Naive thymus-derived CD4-positive, alpha-beta T cell (primary cell): ENCODE measurements at regions of chr14 and their contacts with region 1.

Region 1: DNA sequence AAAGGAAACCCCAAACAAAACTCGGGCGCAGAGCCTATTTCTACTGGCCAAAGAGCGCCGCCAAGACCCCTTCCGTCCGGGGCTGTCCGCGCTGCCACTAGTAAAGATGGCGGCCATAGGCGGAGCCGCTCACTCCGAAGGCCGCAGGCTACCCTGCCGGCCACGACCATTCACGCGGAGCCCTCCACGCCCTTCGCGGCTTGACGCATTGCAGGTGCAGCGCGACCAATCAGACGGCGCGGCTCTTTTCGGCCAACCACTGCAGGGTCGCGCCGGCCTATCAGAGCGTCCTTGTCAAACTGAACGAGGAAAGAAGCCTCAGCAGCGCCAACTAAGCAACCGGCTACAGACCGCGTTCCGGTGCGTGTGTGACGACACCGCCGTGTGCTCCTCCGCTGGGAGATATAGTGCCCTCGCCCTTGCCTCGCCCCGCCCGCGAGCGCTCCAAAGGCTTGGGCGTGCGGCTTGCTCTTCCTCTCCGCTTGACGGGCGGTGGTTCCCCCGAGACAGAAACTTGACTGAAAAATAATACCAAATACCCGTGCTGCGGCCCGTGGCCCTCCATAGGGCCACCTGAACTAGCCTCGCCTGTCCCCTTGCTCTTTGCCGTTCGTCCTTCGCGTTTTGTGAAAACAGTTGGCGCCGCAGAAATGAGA is 13.6 kb upstream of the CALM1 start:
- DNase-seq: peak; percentile 93 to 98 (median 96)
- ATAC-seq: peak; percentile 91
- H3K4me3 ChIP-seq: peak overlapping the region; percentile 95
- H3K4me3 Mint-ChIP-seq: no peak overlapping the region
- H3K27ac ChIP-seq: peak overlapping the region; percentile 99
- H3K27ac Mint-ChIP-seq: no peak overlapping the region
- H3K4me1 ChIP-seq: peaks cover 18 to 23% of the 10 kb centered on the region in 2 donors
- H3K4me1 Mint-ChIP-seq: peaks cover 20 to 37% (median 26%) of the 10 kb centered on the region in 7 donors
- H3K27me3 ChIP-seq: no peaks in the 10 kb centered on the region
- H3K27me3 Mint-ChIP-seq: peaks cover 0 to 5% (median 0%) of the 10 kb centered on the region in 5 donors

Region 2: DNA sequence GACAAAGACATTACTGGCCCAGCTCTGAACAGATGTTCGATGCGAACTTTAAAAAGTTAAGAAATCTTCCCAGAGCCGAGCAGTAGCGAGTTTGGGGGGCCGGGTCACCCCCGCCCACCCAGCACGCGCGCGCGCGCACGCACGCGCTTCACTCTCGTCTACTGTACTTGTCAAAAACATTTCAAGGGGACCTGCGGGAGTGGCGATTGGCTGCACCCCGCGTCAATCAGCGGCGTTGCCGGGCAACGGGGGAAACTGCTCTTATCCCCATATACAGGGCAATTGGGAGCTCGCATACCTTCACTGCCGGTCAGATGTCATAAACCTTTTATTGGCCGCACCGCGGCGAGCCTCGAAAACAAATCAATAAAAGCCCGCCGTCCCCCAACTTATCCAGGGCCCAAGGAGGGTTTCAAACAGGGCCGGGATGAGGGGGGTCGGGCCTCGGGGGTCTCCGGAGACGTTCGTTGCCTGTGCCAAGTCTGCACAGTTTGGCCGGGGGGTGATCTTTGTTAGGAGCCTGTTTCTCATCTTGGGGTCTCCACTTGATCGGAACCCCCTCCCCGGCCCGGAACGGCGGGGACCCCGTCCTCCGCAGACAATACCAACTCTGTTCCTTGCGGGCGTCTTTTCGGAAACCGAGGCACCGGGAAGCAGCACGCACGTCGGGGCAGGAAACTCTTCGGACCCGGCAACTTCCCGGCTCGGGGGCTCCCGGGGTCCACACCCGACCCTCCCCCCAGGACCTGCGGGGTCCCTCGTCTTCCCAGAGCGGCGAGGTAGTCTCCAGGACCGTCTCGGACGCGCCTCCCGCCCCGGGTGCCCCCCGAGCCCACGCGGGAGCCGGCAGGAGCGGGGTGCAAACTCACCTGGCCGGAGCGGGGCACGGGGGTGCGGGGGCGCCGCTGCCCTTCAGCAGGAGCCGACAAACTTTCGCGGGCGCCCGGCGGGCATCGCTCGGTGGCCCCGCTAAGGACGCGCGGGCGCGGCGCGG is 966.9 kb before region 1 on chr14:
- CTCF ChIA-PET with region 1: no interaction called
- POLR2A ChIA-PET with region 1: no interaction called
- intact Hi-C with region 1: loop called in 1 of 2 experiments (anchors 5 kb)
- DNase-seq: peak; percentile 97 to 100 (median 98)
- ATAC-seq: peak; percentile 82
- H3K4me3 ChIP-seq: peak overlapping the region; percentile 83
- H3K4me3 Mint-ChIP-seq: peak overlapping the region; percentile 87 to 97 (median 94)
- H3K27ac ChIP-seq: peak overlapping the region; percentile 76
- H3K27ac Mint-ChIP-seq: peak overlapping the region; percentile 81 to 94 (median 90)
- H3K4me1 ChIP-seq: peaks cover 11 to 20% of the 10 kb centered on the region in 2 donors
- H3K4me1 Mint-ChIP-seq: peaks cover 37 to 70% (median 63%) of the 10 kb centered on the region in 7 donors
- H3K27me3 ChIP-seq: no peaks in the 10 kb centered on the region
- H3K27me3 Mint-ChIP-seq: peaks cover 0 to 2% (median 0%) of the 10 kb centered on the region in 5 donors

Region 3: GRCh38 chr14:90368946-90369721 is 14.1 kb before region 1 on chr14:
- CTCF ChIA-PET with region 1: interaction called, 6 read pairs
- POLR2A ChIA-PET with region 1: interaction called, 47 read pairs
- intact Hi-C with region 1: loop called in 1 of 2 experiments (anchors 1 kb)
- DNase-seq: peak in 7 of 9 donors; percentile 25 to 60 (median 39)
- ATAC-seq: peak; percentile 90
- H3K4me3 ChIP-seq: no peak overlapping the region
- H3K4me3 Mint-ChIP-seq: no peak overlapping the region
- H3K27ac ChIP-seq: no peak overlapping the region
- H3K27ac Mint-ChIP-seq: no peak overlapping the region
- H3K4me1 ChIP-seq: no peaks in the 10 kb centered on the region
- H3K4me1 Mint-ChIP-seq: peaks cover 0 to 8% (median 4%) of the 10 kb centered on the region in 7 donors
- H3K27me3 ChIP-seq: no peaks in the 10 kb centered on the region
- H3K27me3 Mint-ChIP-seq: peaks cover 0 to 25% (median 0%) of the 10 kb centered on the region in 5 donors

Region 4: GRCh38 chr14:90697577-90698206 is 314.5 kb after region 1 on chr14:
- CTCF ChIA-PET with region 1: interaction called, 5 read pairs
- POLR2A ChIA-PET with region 1: interaction called, 5 read pairs
- intact Hi-C with region 1: loop called in 1 of 2 experiments (anchors 5 kb)
- DNase-seq: peak; percentile 48 to 75 (median 70)
- ATAC-seq: peak; percentile 91
- H3K4me3 ChIP-seq: no peak overlapping the region
- H3K4me3 Mint-ChIP-seq: no peak overlapping the region
- H3K27ac ChIP-seq: no peak overlapping the region
- H3K27ac Mint-ChIP-seq: no peak overlapping the region
- H3K4me1 ChIP-seq: no peaks in the 10 kb centered on the region
- H3K4me1 Mint-ChIP-seq: peaks cover 0 to 5% (median 0%) of the 10 kb centered on the region in 7 donors
- H3K27me3 ChIP-seq: no peaks in the 10 kb centered on the region
- H3K27me3 Mint-ChIP-seq: no peaks in the 10 kb centered on the region

Region 5: DNA sequence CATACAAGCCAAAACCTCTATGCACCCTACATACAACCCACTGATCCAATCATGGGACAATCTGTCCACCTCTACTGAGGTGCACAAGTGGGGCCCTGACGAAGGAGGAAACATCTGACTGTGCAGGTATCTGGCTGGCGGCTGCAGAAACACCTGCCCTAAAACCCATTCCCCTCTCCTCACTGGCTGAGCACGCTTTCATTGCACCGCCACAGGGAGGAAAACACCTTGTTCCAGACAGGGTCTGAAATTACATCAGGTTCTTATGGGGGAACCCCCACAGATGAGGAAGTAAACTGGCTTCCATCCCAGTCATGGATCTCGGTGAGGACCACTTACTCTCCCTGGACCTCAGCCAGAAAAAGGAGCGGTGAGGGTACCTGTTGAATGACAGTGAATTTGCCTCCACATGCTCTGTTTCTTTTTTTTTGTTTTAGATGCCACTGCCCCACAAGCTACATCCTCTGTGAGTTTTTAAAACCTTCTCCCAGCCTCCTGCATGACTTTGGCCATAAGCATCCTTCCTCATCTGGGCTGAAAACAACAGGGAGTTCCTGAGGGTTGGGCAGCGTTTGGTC is 706.8 kb after region 1 on chr14:
- CTCF ChIA-PET with region 1: no interaction called
- POLR2A ChIA-PET with region 1: no interaction called
- intact Hi-C with region 1: no loop called
- DNase-seq: no peak
- ATAC-seq: no peak
- H3K4me3 ChIP-seq: no peak overlapping the region
- H3K4me3 Mint-ChIP-seq: no peak overlapping the region
- H3K27ac ChIP-seq: no peak overlapping the region
- H3K27ac Mint-ChIP-seq: no peak overlapping the region
- H3K4me1 ChIP-seq: peaks cover 0 to 5% of the 10 kb centered on the region in 2 donors
- H3K4me1 Mint-ChIP-seq: peaks cover 10 to 18% (median 13%) of the 10 kb centered on the region in 7 donors
- H3K27me3 ChIP-seq: no peaks in the 10 kb centered on the region
- H3K27me3 Mint-ChIP-seq: peaks cover 0 to 20% (median 0%) of the 10 kb centered on the region in 5 donors

Region 6: DNA sequence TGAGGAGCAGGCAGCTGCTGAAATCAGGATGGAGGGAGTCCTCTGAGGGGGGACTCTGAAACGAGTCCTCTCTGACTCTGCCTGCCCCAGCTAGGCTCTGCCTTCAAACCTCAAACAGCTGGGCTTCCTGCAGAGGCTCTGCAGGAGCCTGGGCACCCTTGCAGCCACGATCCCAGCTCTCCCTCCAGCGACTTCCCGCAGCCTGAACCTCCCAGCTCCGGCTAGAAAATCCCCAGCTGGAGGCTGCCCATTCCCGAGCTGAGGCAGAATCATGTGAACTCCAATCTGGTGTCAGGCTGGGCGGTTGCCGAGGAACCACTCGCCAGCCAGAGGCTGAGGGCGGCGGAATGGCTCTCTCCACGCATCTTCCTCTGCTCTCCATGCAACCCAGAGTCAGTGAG is 861.3 kb after region 1 on chr14 and contains the start of gene GPR68:
- CTCF ChIA-PET with region 1: no interaction called
- POLR2A ChIA-PET with region 1: interaction called, 3 read pairs
- intact Hi-C with region 1: loop called (anchors 5 to 10 kb)
- DNase-seq: peak in 2 of 9 donors; percentile 25 to 39
- ATAC-seq: no peak
- H3K4me3 ChIP-seq: peak within 1 kb of the TSS; percentile 59
- H3K4me3 Mint-ChIP-seq: peak within 1 kb of the TSS; percentile 72 to 91 (median 82)
- H3K27ac ChIP-seq: peak within 1 kb of the TSS; percentile 89
- H3K27ac Mint-ChIP-seq: peak within 1 kb of the TSS; percentile 79 to 100 (median 98)
- H3K4me1 ChIP-seq: peaks cover 51 to 63% of the 10 kb centered on the region in 2 donors
- H3K4me1 Mint-ChIP-seq: peaks cover 56 to 96% (median 89%) of the 10 kb centered on the region in 7 donors
- H3K27me3 ChIP-seq: no peaks in the 10 kb centered on the region
- H3K27me3 Mint-ChIP-seq: no peaks in the 10 kb centered on the region
- total RNA-seq, gene GPR68: 0.86 to 38.6 (median 2.3) TPM

Region 7: GRCh38 chr14:91866061-91866460 is 1482.9 kb after region 1 on chr14:
- CTCF ChIA-PET with region 1: no interaction called
- POLR2A ChIA-PET with region 1: no interaction called
- intact Hi-C with region 1: loop called (anchors 2 to 5 kb)
- DNase-seq: peak in 6 of 9 donors; percentile 29 to 51 (median 34)
- ATAC-seq: no peak
- H3K4me3 ChIP-seq: peak overlapping the region; percentile 88
- H3K4me3 Mint-ChIP-seq: peak overlapping the region; percentile 83 to 99 (median 96)
- H3K27ac ChIP-seq: peak overlapping the region; percentile 91
- H3K27ac Mint-ChIP-seq: peak overlapping the region; percentile 96 to 100 (median 99)
- H3K4me1 ChIP-seq: peaks cover 64 to 67% of the 10 kb centered on the region in 2 donors
- H3K4me1 Mint-ChIP-seq: peaks cover 55 to 84% (median 70%) of the 10 kb centered on the region in 7 donors
- H3K27me3 ChIP-seq: no peaks in the 10 kb centered on the region
- H3K27me3 Mint-ChIP-seq: no peaks in the 10 kb centered on the region